ENCODE measurements at regions of chr3 and their contacts with region 1.

Region 1: DNA sequence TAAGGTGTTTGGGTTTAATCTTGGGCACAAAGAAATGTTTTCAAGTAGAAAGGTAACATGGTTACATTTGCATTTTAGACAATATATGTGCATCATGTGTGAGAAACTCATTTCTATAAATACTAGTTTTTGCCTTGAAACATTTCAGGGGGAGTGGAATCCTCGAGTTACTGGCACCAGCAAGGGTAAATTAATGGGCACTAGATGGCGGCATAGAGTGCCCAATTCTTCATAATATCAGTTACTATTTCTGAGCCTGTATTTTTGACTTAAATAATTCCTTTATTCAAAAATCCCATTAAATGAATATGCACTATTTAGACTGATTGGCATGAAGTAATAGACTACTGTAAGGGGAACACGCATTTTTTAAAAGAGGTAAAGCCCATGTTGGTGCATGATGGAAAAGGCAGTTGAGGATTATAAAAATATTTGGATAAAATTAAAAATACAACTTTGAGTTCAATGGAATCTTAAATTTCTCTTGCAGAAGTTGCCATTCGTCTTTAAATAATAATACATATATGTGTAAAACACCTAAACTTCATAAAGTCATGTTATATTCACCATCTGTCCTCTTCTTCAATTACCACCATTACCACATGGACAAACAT is 106.3 kb downstream of the ZBTB20 start:
- DNase-seq: peak in 8 of 9 experiments; percentile 1 to 62 (median 33)
- ATAC-seq: peak; percentile 69
- H3K4me3 ChIP-seq: no peak overlapping the region
- H3K4me3 Mint-ChIP-seq: no peak overlapping the region
- H3K27ac ChIP-seq: no peak overlapping the region
- H3K27ac Mint-ChIP-seq: no peak overlapping the region
- H3K4me1 ChIP-seq: no peaks in the 10 kb centered on the region
- H3K4me1 Mint-ChIP-seq: peaks cover 12% of the 10 kb centered on the region
- H3K27me3 ChIP-seq: no peaks in the 10 kb centered on the region
- H3K27me3 Mint-ChIP-seq: no peaks in the 10 kb centered on the region
- CTCF ChIP-seq: peak; percentile 70

Region 2: GRCh38 chr3:115092220-115092791 is 51.5 kb after region 1 on chr3:
- CTCF ChIA-PET with region 1: interaction called, 8 read pairs
- POLR2A ChIA-PET with region 1: no interaction called
- intact Hi-C with region 1: loop called in 1 of 2 experiments (anchors 2 kb)
- DNase-seq: peak; percentile 32 to 77 (median 65)
- ATAC-seq: peak; percentile 72
- H3K4me3 ChIP-seq: no peak overlapping the region
- H3K4me3 Mint-ChIP-seq: no peak overlapping the region
- H3K27ac ChIP-seq: no peak overlapping the region
- H3K27ac Mint-ChIP-seq: peak overlapping the region; percentile 8
- H3K4me1 ChIP-seq: no peaks in the 10 kb centered on the region
- H3K4me1 Mint-ChIP-seq: peaks cover 50% of the 10 kb centered on the region
- H3K27me3 ChIP-seq: no peaks in the 10 kb centered on the region
- H3K27me3 Mint-ChIP-seq: no peaks in the 10 kb centered on the region
- CTCF ChIP-seq: peak; percentile 89

Measured in CD8-positive, alpha-beta T cell (primary cell).